ENCODE measurements at regions of chr3 and their contacts with region 1.

Region 1: GRCh38 chr3:159804726-159805410 is 183.8 kb upstream of the IL12A start:
- DNase-seq: peak; percentile 84
- H3K4me3 Mint-ChIP-seq: no peak overlapping the region
- H3K27ac Mint-ChIP-seq: no peak overlapping the region
- H3K4me1 Mint-ChIP-seq: peaks cover 37% of the 10 kb centered on the region
- H3K27me3 Mint-ChIP-seq: no peaks in the 10 kb centered on the region
- CTCF ChIP-seq: peak; percentile 97

Region 2: DNA sequence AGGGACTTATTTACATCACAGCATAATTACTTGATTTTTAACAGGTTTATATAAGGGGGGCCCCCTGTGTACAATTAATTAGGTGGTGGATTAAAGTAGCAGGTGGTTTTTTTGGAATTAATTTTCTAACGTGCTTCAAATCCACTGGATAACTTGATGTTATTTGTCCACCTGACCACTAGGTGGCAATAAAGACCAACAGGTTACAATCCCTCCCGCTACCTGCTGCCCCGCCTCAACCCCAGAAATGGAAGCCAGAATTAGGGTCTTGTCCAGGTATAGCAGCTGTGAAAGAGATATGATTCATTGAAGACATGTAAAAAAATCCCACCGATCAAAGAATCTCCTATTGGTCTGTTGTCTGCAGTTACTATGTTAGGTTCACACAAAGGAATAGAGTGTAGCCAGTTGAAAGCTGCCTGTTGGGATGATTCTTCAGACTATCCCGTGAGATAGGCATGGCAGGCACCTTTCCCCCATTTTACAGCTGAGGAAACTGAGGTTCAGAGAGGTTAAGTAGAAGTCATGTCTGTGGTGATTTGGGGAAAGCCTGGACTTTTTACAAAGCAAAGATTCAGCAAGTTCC is 959.0 kb before region 1 on chr3:
- CTCF ChIA-PET with region 1: interaction called, 4 read pairs
- intact Hi-C with region 1: loop called (anchors 10 kb)
- DNase-seq: peak; percentile 65
- H3K4me3 Mint-ChIP-seq: no peak overlapping the region
- H3K27ac Mint-ChIP-seq: no peak overlapping the region
- H3K4me1 Mint-ChIP-seq: no peaks in the 10 kb centered on the region
- H3K27me3 Mint-ChIP-seq: no peaks in the 10 kb centered on the region
- CTCF ChIP-seq: peak; percentile 93

Region 3: GRCh38 chr3:159616212-159616825 is 188.5 kb before region 1 on chr3:
- CTCF ChIA-PET with region 1: interaction called, 7 read pairs
- intact Hi-C with region 1: loop called (anchors 1 kb)
- DNase-seq: peak; percentile 81
- H3K4me3 Mint-ChIP-seq: no peak overlapping the region
- H3K27ac Mint-ChIP-seq: no peak overlapping the region
- H3K4me1 Mint-ChIP-seq: peaks cover 12% of the 10 kb centered on the region
- H3K27me3 Mint-ChIP-seq: no peaks in the 10 kb centered on the region
- CTCF ChIP-seq: peak; percentile 84

Region 4: GRCh38 chr3:159763602-159764489 is 41.0 kb before region 1 on chr3:
- CTCF ChIA-PET with region 1: interaction called, 20 read pairs
- intact Hi-C with region 1: loop called (anchors 1 kb)
- DNase-seq: peak; percentile 95
- H3K4me3 Mint-ChIP-seq: peak overlapping the region; percentile 92
- H3K27ac Mint-ChIP-seq: peak overlapping the region; percentile 85
- H3K4me1 Mint-ChIP-seq: peaks cover 56% of the 10 kb centered on the region
- H3K27me3 Mint-ChIP-seq: no peaks in the 10 kb centered on the region
- CTCF ChIP-seq: peak; percentile 50

Region 5: DNA sequence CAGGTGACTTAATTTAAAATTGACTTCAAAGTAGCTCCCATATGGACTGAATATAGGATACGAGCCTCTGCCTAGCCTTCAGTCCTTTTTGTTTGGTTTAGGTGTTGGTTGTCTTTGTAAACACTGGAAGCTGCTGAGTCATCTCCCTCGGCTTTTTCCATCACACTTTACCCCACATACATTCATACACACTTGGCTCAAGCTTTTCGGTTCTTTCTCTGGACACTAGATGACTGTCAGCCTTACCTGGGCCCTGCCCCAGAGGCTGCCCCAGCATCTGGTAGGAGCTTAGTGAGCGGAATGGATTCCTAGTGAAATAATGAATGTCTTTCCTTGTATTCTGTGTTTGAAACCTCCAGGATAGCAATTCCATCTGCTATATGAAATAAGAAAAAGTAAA is 17.7 kb before region 1 on chr3:
- CTCF ChIA-PET with region 1: interaction called, 42 read pairs
- intact Hi-C with region 1: loop called (anchors 1 kb)
- DNase-seq: peak; percentile 66
- H3K4me3 Mint-ChIP-seq: peak overlapping the region; percentile 32
- H3K27ac Mint-ChIP-seq: peak overlapping the region; percentile 71
- H3K4me1 Mint-ChIP-seq: peaks cover 84% of the 10 kb centered on the region
- H3K27me3 Mint-ChIP-seq: no peaks in the 10 kb centered on the region
- CTCF ChIP-seq: no peak

Region 6: GRCh38 chr3:159852821-159853505 is 48.1 kb after region 1 on chr3:
- CTCF ChIA-PET with region 1: no interaction called
- intact Hi-C with region 1: no loop called
- DNase-seq: peak; percentile 35
- H3K4me3 Mint-ChIP-seq: no peak overlapping the region
- H3K27ac Mint-ChIP-seq: no peak overlapping the region
- H3K4me1 Mint-ChIP-seq: peaks cover 34% of the 10 kb centered on the region
- H3K27me3 Mint-ChIP-seq: no peaks in the 10 kb centered on the region
- CTCF ChIP-seq: no peak

Measured in Calu3 (cell line).